MCF 10A (cell line): ENCODE measurements at regions of chr11 and their contacts with region 1.

Region 1: GRCh38 chr11:44095506-44096394 is at the start of gene EXT2:
- DNase-seq: peak; percentile 81
- H3K4me3 Mint-ChIP-seq: peak within 1 kb of the TSS; percentile 82
- H3K27ac Mint-ChIP-seq: peak within 1 kb of the TSS; percentile 61
- H3K4me1 Mint-ChIP-seq: peaks cover 13% of the 10 kb centered on the region
- H3K27me3 Mint-ChIP-seq: no peaks in the 10 kb centered on the region
- CTCF ChIP-seq: peak; percentile 74
- total RNA-seq, gene EXT2: 73.1 and 82.7 TPM in 2 replicates

Region 2: DNA sequence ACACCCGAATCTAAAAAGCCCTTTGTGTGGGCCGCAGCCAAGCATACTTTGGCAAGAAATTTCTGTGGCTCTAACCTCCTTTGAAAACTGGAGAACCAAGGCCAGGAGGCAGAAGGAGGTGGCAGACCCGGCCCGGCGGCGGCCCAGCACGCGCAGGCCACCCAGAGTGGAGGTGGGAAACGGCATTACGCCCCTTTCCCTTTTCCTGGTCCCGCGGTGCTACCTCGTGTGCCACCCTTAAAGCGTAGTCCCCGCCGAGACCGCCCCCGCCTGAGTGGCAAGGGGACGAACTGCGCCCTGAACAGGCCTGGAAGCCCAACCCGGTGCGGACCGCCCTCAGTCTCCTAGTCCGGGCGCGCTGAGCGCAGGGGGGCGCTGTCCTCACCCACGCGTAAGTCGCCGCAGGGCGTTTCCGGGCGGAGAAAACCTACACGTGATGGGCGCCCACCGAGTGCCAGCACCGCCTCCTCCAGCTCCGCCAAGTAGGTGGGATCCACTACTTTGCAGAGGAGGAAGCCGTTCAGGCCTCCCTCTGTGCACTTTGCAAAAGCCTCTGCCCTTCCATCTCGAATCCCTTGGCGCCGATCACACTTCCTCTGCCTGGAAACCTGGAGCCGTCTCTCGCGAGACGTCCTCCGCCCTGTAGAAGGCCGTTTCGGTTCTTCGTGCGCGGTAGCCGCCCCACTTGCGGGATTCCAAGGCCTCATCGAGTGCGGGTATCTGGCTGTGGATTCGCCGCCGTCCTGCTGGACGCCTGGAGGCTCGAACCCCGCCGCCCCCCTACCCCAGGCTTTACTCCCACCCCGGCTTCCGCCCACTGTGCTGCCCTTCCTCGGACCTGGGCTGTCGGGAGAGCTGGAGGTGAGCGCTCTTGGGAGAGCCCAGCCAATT is 29.7 kb before region 1 on chr11 and contains the start of gene ACCS:
- CTCF ChIA-PET with region 1: interaction called, 14 read pairs
- POLR2A ChIA-PET with region 1: interaction called, 16 read pairs
- intact Hi-C with region 1: no loop called
- DNase-seq: peak; percentile 85
- H3K4me3 Mint-ChIP-seq: peak within 1 kb of the TSS; percentile 78
- H3K27ac Mint-ChIP-seq: peak within 1 kb of the TSS; percentile 89
- H3K4me1 Mint-ChIP-seq: peaks cover 11% of the 10 kb centered on the region
- H3K27me3 Mint-ChIP-seq: no peaks in the 10 kb centered on the region
- CTCF ChIP-seq: peak; percentile 56
- total RNA-seq, gene ACCS: 7.9 and 12.0 TPM in 2 replicates

Region 3: GRCh38 chr11:44110231-44110679 is 14.5 kb after region 1 on chr11:
- CTCF ChIA-PET with region 1: interaction called, 57 read pairs
- POLR2A ChIA-PET with region 1: interaction called, 13 read pairs
- intact Hi-C with region 1: no loop called
- DNase-seq: peak; percentile 56
- H3K4me3 Mint-ChIP-seq: no peak overlapping the region
- H3K27ac Mint-ChIP-seq: no peak overlapping the region
- H3K4me1 Mint-ChIP-seq: peaks cover 13% of the 10 kb centered on the region
- H3K27me3 Mint-ChIP-seq: no peaks in the 10 kb centered on the region
- CTCF ChIP-seq: peak; percentile 61

Region 4: DNA sequence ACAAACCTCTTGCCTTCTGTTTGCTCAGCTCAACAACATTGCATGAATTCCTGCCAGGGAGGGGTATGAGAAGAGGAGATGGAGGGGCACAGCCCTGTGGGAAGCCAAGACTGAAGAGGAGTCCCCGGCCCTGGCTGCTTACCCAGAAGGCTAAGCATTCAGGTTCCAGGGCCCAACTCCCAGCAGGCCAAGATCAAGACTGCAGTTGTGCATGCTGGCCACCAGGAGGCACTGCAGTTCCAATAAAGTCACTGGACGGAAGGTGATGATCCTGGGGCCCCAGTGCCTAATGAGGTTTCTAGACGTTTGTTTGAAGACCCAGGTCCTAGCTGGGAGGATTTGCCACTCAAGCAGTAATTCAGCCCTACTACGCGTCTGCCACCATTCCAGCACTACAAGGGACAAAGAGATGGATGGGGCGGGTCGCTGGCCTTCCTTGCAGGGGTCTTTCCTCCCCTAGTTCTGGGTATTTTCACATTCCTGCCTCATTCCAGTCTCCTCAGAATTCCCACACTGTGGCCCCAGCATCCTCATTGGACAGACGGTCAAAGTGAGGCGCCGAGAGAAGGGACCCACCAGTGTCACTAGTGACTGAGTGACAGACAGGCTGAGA is 190.6 kb after region 1 on chr11:
- CTCF ChIA-PET with region 1: interaction called, 5 read pairs
- POLR2A ChIA-PET with region 1: no interaction called
- intact Hi-C with region 1: loop called (anchors 5 kb)
- DNase-seq: peak; percentile 69
- H3K4me3 Mint-ChIP-seq: no peak overlapping the region
- H3K27ac Mint-ChIP-seq: no peak overlapping the region
- H3K4me1 Mint-ChIP-seq: peaks cover 10% of the 10 kb centered on the region
- H3K27me3 Mint-ChIP-seq: peaks cover 15% of the 10 kb centered on the region
- CTCF ChIP-seq: peak; percentile 95